Dendritic cell treated with granulocyte-macrophage colony-stimulating factor and Interleukin-4, amounts not matched to agents 40 ng/mL and 50 ng/mL, for 4 days (primary cell): ENCODE measurements at regions of chr11 and their contacts with region 1.

Region 1: GRCh38 chr11:72642884-72643511 is 31.2 kb downstream of the PDE2A start:
- H3K4me3 Mint-ChIP-seq: no peak overlapping the region
- H3K27ac Mint-ChIP-seq: no peak overlapping the region
- H3K4me1 Mint-ChIP-seq: peaks cover 7% of the 10 kb centered on the region
- H3K27me3 Mint-ChIP-seq: peaks cover 28% of the 10 kb centered on the region

Region 2: GRCh38 chr11:72471005-72471898 is 171.7 kb before region 1 on chr11:
- intact Hi-C with region 1: loop called (anchors 5 kb)
- H3K4me3 Mint-ChIP-seq: no peak overlapping the region
- H3K27ac Mint-ChIP-seq: no peak overlapping the region
- H3K4me1 Mint-ChIP-seq: peaks cover 9% of the 10 kb centered on the region
- H3K27me3 Mint-ChIP-seq: peaks cover 51% of the 10 kb centered on the region

Region 3: DNA sequence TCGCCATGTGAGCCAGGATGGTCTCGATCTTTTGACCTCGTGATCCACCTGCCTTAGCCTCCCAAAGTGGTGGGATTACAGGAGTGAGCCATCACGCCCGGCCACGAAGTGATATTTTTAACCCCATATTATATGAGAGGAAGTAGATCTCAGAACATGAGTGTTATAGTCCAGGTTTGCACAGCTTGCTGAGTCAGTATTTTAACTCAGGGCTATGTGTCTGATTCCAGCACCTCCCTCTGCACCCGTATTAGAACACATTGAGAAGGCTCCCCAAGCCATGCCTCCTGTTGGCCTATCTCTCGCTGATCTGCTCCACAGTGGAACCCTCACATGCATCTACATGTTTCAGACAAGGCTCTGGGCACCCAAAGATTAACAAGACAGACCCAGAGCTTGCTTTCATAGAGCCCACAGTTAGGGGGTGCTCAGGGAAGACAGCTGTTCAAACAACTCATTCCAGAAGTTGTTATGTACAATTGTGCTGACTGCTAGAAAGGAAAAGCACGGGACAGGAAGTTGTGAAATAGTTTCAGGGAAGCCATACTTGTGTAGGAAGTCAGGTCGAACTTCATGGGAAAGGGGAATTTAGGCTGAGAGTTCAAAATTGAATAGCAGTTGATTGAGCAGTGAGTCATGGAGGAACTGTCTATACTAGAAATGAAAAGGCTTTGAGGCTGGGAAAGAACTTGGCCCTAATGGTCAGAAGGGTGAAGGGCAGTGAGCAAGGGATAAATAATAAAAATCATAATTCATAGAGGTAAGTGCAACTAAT is 159.4 kb before region 1 on chr11:
- intact Hi-C with region 1: loop called (anchors 1 kb)
- H3K4me3 Mint-ChIP-seq: no peak overlapping the region
- H3K27ac Mint-ChIP-seq: peak overlapping the region; percentile 95
- H3K4me1 Mint-ChIP-seq: peaks cover 36% of the 10 kb centered on the region
- H3K27me3 Mint-ChIP-seq: no peaks in the 10 kb centered on the region

Region 4: DNA sequence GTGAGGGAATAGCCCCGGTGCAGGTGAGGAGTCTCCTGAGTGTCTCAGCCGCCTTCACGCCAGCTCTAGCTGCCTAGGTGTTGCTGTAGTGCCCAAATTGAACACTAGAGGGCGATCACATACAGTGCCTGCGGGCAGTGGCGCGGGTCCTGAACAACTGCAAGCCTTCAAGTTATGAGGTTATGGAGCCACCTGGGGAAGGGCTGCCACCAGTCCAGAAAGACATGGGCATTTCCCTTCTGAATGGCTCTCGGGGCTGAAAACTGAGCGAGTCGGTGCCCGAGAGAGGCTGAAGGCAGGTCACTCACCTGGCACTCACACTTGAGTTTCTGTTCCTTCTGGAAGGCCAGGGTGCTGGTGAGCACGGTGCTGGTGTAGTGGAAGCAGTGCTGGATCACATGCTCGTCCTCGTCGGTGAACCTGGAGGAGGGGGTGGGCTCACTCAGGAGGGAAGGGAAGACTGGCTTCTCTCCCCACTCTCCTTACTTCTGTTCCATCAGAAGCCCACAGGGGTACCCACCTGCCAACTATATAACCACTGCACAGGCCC is 57.2 kb before region 1 on chr11:
- intact Hi-C with region 1: loop called (anchors 2 kb)
- H3K4me3 Mint-ChIP-seq: no peak overlapping the region
- H3K27ac Mint-ChIP-seq: no peak overlapping the region
- H3K4me1 Mint-ChIP-seq: peaks cover 63% of the 10 kb centered on the region
- H3K27me3 Mint-ChIP-seq: peaks cover 73% of the 10 kb centered on the region

Region 5: GRCh38 chr11:72598906-72599305 is 44.1 kb before region 1 on chr11:
- intact Hi-C with region 1: no loop called
- H3K4me3 Mint-ChIP-seq: no peak overlapping the region
- H3K27ac Mint-ChIP-seq: peak overlapping the region; percentile 40
- H3K4me1 Mint-ChIP-seq: peaks cover 58% of the 10 kb centered on the region
- H3K27me3 Mint-ChIP-seq: peaks cover 85% of the 10 kb centered on the region

Region 6: GRCh38 chr11:72613977-72614376 is 29.0 kb before region 1 on chr11:
- intact Hi-C with region 1: loop called (anchors 1 kb)
- H3K4me3 Mint-ChIP-seq: no peak overlapping the region
- H3K27ac Mint-ChIP-seq: peak overlapping the region; percentile 68
- H3K4me1 Mint-ChIP-seq: peaks cover 79% of the 10 kb centered on the region
- H3K27me3 Mint-ChIP-seq: peaks cover 84% of the 10 kb centered on the region

Region 7: GRCh38 chr11:72625691-72626413 is 17.1 kb before region 1 on chr11:
- intact Hi-C with region 1: no loop called
- H3K4me3 Mint-ChIP-seq: no peak overlapping the region
- H3K27ac Mint-ChIP-seq: peak overlapping the region; percentile 67
- H3K4me1 Mint-ChIP-seq: peaks cover 32% of the 10 kb centered on the region
- H3K27me3 Mint-ChIP-seq: peaks cover 89% of the 10 kb centered on the region